Transverse colon (tissue), 4 donors: ENCODE measurements at regions of chr5 and their contacts with region 1.

Region 1: GRCh38 chr5:91419571-91420537 is 36.7 kb upstream of the ARRDC3 start:
- DNase-seq: peak; percentile 77
- H3K4me3 ChIP-seq: no peak overlapping the region
- H3K27ac ChIP-seq: no peak overlapping the region
- H3K4me1 ChIP-seq: peaks cover 0 to 10% (median 1%) of the 10 kb centered on the region in 4 donors
- H3K27me3 ChIP-seq: no peaks in the 10 kb centered on the region
- CTCF ChIP-seq: peak; percentile 74 to 89 (median 81)
- EP300 ChIP-seq: no peak
- POLR2A ChIP-seq: no peak

Region 2: DNA sequence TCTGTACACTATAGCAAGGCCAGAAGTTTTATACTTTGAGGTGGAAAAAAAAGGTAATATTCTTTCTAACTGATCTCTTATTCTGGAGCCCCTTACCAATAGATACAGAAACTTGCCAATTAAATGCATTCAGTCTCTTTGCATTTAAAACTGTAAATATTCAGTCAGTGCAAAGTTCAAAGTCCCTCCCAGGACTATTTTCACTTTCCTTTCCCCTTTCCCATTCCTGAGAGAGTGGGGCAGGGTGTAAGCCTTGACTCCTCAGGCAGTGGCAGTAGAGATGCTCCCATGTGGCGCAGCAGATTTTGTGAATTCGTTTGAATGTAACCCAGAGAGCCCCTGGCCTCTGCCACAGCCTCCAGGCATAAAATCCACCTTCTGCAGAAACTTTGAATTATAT is 1040.2 kb before region 1 on chr5:
- in situ Hi-C with region 1: no loop called
- intact Hi-C with region 1: no loop called
- DNase-seq: no peak
- H3K4me3 ChIP-seq: no peak overlapping the region
- H3K27ac ChIP-seq: no peak overlapping the region
- H3K4me1 ChIP-seq: peaks cover 0 to 10% (median 5%) of the 10 kb centered on the region in 4 donors
- H3K27me3 ChIP-seq: no peaks in the 10 kb centered on the region
- CTCF ChIP-seq: no peak
- EP300 ChIP-seq: no peak
- POLR2A ChIP-seq: no peak

Region 3: DNA sequence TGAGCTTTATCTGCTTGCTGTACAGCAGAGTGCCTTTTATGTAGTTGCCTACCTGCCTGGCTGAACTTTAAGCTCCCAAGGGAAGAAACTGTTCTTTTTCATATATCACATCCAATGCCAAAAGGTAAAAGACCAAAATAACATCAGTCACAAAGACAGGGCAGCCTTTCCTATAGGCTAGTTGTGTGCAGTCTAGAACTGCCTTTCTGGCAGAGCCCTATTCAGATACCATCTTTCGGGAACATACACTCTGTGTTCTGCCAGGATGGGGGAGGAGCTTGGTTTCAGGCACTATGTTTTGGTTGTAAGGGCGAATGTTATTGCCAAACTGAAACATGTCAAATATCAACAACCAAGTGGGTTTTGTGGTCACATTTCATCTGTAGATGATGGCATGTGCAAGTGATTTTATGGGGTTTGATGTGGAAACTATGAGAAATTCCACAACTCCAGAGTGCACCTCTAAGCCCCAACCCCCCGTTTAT is 546.8 kb before region 1 on chr5:
- in situ Hi-C with region 1: loop called in 3 of 4 experiments (anchors 10 to 25 kb)
- intact Hi-C with region 1: loop called (anchors 5 kb)
- DNase-seq: no peak
- H3K4me3 ChIP-seq: no peak overlapping the region
- H3K27ac ChIP-seq: no peak overlapping the region
- H3K4me1 ChIP-seq: peaks cover 0 to 11% (median 2%) of the 10 kb centered on the region in 4 donors
- H3K27me3 ChIP-seq: no peaks in the 10 kb centered on the region
- CTCF ChIP-seq: no peak
- EP300 ChIP-seq: no peak
- POLR2A ChIP-seq: no peak